ENCODE measurements at regions of chr2 and their contacts with region 1.

Region 1: GRCh38 chr2:150487537-150488429 is at the start of gene RND3:
- ATAC-seq: peak; percentile 42 to 71 (median 64)
- H3K4me3 ChIP-seq: peak within 1 kb of the TSS; percentile 70 to 84 (median 80)
- H3K27ac ChIP-seq: peak within 1 kb of the TSS; percentile 83 to 86
- H3K4me1 ChIP-seq: peaks cover 8% of the 10 kb centered on the region in 2 donors
- total RNA-seq, gene RND3: 119 to 208 (median 165) TPM

Region 2: GRCh38 chr2:149611099-149611820 is 876.5 kb before region 1 on chr2:
- in situ Hi-C with region 1: loop called in 7 of 9 experiments (anchors 10 to 25 kb)
- ATAC-seq: peak in 7 of 8 experiments; percentile 40 to 77 (median 64)
- H3K4me3 ChIP-seq: no peak overlapping the region
- H3K27ac ChIP-seq: no peak overlapping the region
- H3K4me1 ChIP-seq: no peaks in the 10 kb centered on the region

Region 3: DNA sequence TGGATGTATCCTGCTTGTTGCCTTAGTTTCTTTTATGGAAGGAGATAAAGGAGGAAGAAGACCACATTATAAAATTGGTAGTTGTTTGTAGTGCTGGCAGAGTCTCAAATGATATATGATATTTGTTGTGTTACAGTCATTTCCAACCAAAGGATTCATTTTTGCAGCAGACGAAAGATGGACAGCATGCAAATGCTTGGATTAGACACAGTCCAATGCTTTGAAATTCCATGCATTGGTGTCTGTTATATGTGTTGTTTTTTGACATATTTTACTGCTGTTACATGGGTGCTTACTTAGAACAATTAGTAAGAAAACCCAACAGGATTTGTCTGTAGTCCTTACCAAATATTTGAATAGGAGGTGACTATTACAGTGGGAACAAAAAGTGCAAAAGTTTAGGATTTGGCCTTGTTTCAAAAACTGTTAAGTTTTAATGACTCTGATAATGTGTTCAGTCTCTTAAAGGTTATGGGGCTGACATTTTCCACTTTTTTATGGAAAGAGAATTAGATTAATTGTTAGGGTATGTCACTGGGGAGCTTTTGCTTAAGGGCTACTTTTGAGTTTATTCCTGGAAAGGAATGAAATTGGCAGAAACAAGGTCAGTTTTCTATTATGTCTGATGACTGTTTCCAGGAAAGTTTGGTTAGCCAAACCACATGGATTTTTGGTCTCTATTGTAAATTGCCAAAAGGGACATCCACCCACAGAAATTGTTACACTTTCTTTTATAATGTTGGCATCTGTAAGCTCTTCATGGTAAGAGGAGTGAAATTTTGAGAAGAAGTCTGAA is 670.8 kb before region 1 on chr2:
- in situ Hi-C with region 1: loop called in 1 of 9 experiments (anchors 25 kb)
- ATAC-seq: no peak
- H3K4me3 ChIP-seq: no peak overlapping the region
- H3K27ac ChIP-seq: no peak overlapping the region
- H3K4me1 ChIP-seq: peaks cover 0 to 26% of the 10 kb centered on the region in 2 donors

Region 4: GRCh38 chr2:150911766-150912280 is 424.0 kb after region 1 on chr2:
- in situ Hi-C with region 1: loop called in 1 of 9 experiments (anchors 25 kb)
- ATAC-seq: peak in 5 of 8 experiments; percentile 31 to 99 (median 52)
- H3K4me3 ChIP-seq: no peak overlapping the region
- H3K27ac ChIP-seq: no peak overlapping the region
- H3K4me1 ChIP-seq: peaks cover 2 to 10% of the 10 kb centered on the region in 2 donors

Region 5: GRCh38 chr2:151051574-151052220 is 563.9 kb after region 1 on chr2:
- in situ Hi-C with region 1: no loop called
- ATAC-seq: peak in 4 of 8 experiments; percentile 14 to 96 (median 90)
- H3K4me3 ChIP-seq: no peak overlapping the region
- H3K27ac ChIP-seq: no peak overlapping the region
- H3K4me1 ChIP-seq: peaks cover 0 to 19% of the 10 kb centered on the region in 2 donors

Measured in motor neuron (in vitro differentiated cells).